ENCODE measurements at regions of chr2 and their contacts with region 1.

Region 1: DNA sequence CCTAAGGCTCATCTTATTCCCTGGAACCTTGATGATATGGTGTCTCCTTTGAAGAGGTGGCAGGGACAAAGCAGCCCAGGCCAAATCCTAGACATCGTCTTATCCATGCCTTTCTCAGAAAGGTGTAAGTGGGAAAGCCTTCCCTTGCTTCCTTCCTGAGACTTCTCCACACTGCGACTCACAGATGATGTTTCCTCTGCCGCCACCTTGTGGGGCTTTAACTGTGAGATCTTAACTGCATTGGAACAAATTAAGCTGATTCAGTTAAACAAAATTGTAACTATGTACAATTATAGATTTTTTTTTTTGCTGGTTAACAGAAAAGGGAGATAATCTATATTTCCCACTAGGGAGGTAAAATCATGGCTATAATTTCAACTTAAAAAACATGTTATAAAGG is 10.0 kb upstream of the GCA start:
- DNase-seq: no peak
- H3K4me3 ChIP-seq: no peak overlapping the region
- H3K4me3 Mint-ChIP-seq: no peak overlapping the region
- H3K27ac ChIP-seq: no peak overlapping the region
- H3K27ac Mint-ChIP-seq: no peak overlapping the region
- H3K4me1 ChIP-seq: no peaks in the 10 kb centered on the region
- H3K4me1 Mint-ChIP-seq: no peaks in the 10 kb centered on the region
- H3K27me3 ChIP-seq: no peaks in the 10 kb centered on the region
- H3K27me3 Mint-ChIP-seq: no peaks in the 10 kb centered on the region

Region 2: GRCh38 chr2:162343824-162344616 is 10.1 kb after region 1 on chr2 and contains the start of gene GCA:
- CTCF ChIA-PET with region 1: interaction called, 16 read pairs
- POLR2A ChIA-PET with region 1: no interaction called
- intact Hi-C with region 1: no loop called
- DNase-seq: peak; percentile 97 to 98 (median 98)
- H3K4me3 ChIP-seq: peak within 1 kb of the TSS; percentile 50 to 90
- H3K4me3 Mint-ChIP-seq: peak within 1 kb of the TSS; percentile 87 to 97 (median 91)
- H3K27ac ChIP-seq: peak within 1 kb of the TSS; percentile 60
- H3K27ac Mint-ChIP-seq: peak within 1 kb of the TSS; percentile 61 to 96 (median 91)
- H3K4me1 ChIP-seq: peaks cover 10% of the 10 kb centered on the region
- H3K4me1 Mint-ChIP-seq: peaks cover 11 to 20% (median 16%) of the 10 kb centered on the region in 4 donors
- H3K27me3 ChIP-seq: no peaks in the 10 kb centered on the region
- H3K27me3 Mint-ChIP-seq: no peaks in the 10 kb centered on the region
- total RNA-seq, gene GCA: 11.5 to 11.9 TPM

Measured in CD4-positive, alpha-beta memory T cell (primary cell).